ENCODE measurements at regions of chr1 and their contacts with region 1.

Region 1: DNA sequence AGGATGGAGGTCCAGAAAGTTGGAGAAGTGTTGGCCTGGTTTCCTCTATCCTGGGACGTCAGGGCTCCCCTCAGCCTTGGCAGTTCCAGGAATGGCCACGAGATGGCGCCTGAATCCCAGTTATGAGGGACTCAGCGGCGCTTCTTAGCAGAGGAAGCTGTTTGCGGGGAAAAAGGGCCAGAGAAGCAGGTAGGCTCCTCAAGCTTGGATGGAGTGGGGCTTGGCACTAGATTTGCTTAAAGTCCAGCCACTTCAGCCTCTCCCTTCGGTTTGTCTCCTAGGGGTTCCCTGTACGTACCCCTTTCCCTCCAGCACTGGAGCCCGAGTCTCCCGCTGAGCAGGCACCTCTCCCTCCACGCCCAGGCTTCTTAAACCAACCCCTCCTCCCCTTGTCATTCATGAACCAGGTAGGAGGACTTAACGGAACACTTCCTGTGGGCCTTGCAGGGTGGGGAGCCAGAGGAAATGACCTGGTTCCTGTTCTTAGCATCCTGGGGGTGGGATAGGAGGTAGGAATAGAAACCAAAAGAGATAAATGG is 32.0 kb upstream of the TENT5B start:
- DNase-seq: peak; percentile 89
- H3K4me3 ChIP-seq: no peak overlapping the region
- H3K27ac ChIP-seq: no peak overlapping the region
- H3K4me1 ChIP-seq: peaks cover 9% of the 10 kb centered on the region
- H3K27me3 ChIP-seq: no peaks in the 10 kb centered on the region
- CTCF ChIP-seq: peak; percentile 94

Region 2: DNA sequence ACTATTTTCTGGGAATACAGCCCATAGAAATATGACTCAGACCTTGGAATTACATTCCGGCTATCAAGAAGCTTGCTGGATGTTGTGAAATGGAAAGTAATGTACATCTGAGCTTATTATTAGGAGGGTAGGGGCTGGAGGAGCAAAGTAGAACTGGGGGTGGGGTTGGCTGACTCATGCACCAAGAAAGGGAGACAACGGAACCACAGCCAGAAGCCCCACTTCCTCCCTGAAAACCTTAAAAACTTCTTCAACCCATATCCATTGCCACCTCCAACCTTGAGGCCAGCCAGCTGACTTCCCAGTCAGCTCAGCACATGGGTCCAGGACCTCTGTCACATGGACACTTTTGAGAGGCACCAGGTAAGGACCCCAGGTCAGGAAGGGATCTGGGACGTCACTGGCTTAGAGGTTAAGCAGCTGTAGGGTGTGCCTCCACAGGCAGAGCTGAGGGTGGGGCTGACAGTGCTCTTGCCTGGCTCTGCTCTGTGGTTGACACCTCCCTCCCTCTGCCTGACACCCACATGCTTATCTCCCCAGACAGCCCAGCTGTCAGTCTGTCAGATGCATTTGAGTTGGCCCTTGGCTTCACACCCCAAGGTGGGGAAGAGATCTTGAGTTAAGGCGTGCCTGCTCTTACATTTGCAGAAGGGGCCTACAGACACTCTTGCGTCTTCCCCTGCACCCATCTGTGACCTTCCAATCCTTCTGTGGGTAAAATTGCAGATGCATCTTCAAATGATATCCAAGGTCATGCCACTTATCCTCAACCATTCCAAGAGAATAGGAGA is 666.4 kb before region 1 on chr1:
- CTCF ChIA-PET with region 1: no interaction called
- POLR2A ChIA-PET with region 1: no interaction called
- intact Hi-C with region 1: no loop called
- DNase-seq: peak; percentile 26
- H3K4me3 ChIP-seq: no peak overlapping the region
- H3K27ac ChIP-seq: no peak overlapping the region
- H3K4me1 ChIP-seq: no peaks in the 10 kb centered on the region
- H3K27me3 ChIP-seq: no peaks in the 10 kb centered on the region
- CTCF ChIP-seq: no peak

Region 3: GRCh38 chr1:26820784-26821269 is 223.9 kb before region 1 on chr1:
- CTCF ChIA-PET with region 1: no interaction called
- POLR2A ChIA-PET with region 1: no interaction called
- intact Hi-C with region 1: no loop called
- DNase-seq: peak; percentile 21
- H3K4me3 ChIP-seq: no peak overlapping the region
- H3K27ac ChIP-seq: no peak overlapping the region
- H3K4me1 ChIP-seq: no peaks in the 10 kb centered on the region
- H3K27me3 ChIP-seq: no peaks in the 10 kb centered on the region
- CTCF ChIP-seq: peak; percentile 30; the same call in 1 of the 2 replicates

Region 4: DNA sequence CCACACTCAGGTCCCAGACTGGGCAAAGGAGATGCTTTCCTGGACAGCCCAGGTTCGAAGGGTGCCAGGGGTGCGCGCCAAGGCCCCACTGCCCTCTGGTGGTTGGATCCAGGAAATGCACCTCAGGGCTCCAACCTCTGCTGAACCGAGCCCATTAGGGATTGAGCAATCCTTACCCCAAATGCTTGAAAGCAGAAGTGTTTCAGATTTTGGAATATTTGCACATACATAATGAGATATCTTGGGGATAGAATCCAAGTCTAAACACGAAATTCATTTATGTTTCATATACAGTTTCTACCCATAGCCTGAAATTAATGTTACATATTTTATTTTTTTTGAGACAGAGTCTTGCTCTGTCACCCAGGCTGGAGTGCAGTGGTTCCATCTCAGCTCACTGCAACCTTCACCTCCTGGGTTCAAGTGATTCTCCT is 52.8 kb after region 1 on chr1:
- CTCF ChIA-PET with region 1: interaction called, 34 read pairs
- POLR2A ChIA-PET with region 1: interaction called, 3 read pairs
- intact Hi-C with region 1: loop called (anchors 1 kb)
- DNase-seq: peak; percentile 86
- H3K4me3 ChIP-seq: no peak overlapping the region
- H3K27ac ChIP-seq: no peak overlapping the region
- H3K4me1 ChIP-seq: peaks cover 16% of the 10 kb centered on the region
- H3K27me3 ChIP-seq: no peaks in the 10 kb centered on the region
- CTCF ChIP-seq: peak; percentile 95

Region 5: DNA sequence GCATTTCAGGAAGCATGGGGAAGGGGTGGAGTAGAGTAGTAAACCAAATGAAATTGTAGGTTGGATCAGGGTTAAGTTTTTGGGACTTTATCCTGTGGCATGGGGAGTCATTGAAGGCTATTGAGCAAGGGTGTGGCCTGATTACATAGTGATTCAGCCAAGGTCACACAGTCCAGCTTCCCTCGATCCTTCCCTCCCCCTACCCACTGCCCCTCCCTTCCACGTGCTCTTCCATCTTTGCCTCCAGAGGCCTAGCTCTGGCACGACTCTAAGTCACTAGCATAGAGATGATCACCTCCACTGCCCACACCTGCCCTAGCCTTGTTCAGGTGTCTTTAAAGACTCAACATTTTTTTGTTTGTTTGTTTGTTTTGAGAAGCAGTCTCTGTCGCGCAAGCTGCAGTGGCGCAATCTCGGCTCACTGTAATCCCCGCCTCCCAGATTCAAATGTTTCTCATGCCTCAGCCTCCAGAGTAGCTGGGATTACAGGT is 147.4 kb after region 1 on chr1:
- CTCF ChIA-PET with region 1: no interaction called
- POLR2A ChIA-PET with region 1: no interaction called
- intact Hi-C with region 1: loop called (anchors 10 kb)
- DNase-seq: no peak
- H3K4me3 ChIP-seq: no peak overlapping the region
- H3K27ac ChIP-seq: no peak overlapping the region
- H3K4me1 ChIP-seq: no peaks in the 10 kb centered on the region
- H3K27me3 ChIP-seq: no peaks in the 10 kb centered on the region
- CTCF ChIP-seq: no peak

Region 6: DNA sequence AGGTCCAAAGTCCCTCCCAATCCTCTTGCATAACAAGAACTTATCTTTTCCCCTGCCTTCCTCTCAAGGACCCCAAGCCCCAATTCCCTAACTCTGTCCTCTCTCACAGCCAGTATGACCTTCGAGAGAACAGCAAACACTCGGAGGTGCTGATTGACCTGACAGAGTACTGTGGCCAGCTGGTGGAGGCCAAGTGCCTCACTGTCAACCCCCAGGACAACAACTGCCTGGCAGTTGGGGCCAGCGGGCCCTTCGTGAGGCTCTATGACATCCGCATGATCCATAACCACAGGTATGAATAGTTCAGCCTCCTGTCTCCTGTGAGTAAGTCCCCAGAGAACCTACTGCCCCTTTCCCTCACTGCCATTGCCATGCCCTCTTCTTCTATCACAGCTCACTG is 247.4 kb after region 1 on chr1:
- CTCF ChIA-PET with region 1: interaction called, 4 read pairs
- POLR2A ChIA-PET with region 1: interaction called, 14 read pairs
- intact Hi-C with region 1: no loop called
- DNase-seq: no peak
- H3K4me3 ChIP-seq: no peak overlapping the region
- H3K27ac ChIP-seq: no peak overlapping the region
- H3K4me1 ChIP-seq: no peaks in the 10 kb centered on the region
- H3K27me3 ChIP-seq: no peaks in the 10 kb centered on the region
- CTCF ChIP-seq: no peak

Region 7: DNA sequence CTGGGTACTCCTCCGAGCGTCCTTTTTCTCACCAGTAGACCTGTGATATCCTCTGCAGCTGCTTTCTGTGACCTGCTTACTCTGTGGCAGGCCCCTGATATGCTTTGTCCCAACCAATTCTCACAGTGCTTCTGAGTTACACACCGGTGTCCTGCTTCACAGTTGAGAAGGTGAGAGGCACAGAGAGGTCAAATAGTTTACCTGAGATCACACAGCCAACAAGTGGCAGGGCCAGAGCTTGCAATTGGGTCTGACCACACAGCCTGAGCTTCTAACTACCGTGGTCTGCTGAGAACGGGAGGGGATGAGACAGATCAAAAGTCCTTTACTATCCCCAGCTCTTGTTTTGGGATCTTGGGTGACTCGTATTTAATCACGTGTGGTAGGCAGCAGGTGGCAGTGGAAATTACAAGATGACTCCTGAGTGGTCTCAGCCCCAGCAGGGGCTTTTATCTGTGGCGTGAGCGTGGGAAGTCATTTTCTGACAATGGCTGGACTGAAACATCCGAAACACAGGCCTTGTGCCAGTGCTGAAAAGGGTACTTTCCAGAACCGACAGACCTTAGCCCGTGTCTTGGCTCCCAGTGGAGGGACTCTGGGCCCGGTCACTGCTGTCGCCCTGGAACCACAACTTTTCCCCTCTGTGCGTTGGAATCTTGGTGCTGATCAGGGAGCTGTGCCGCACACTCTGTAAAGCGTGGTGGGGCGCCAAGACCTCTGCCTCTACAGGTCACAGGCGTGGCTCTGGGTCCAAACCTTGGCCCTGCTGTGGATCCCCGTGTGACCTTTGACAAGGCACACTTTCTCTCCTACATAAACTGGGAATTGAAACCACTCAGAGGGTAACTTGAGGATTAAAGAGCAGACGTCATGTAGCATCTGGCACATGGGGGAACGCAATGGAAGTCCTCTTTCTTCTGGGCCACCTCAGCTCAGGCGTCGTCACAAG is 839.6 kb after region 1 on chr1:
- CTCF ChIA-PET with region 1: no interaction called
- POLR2A ChIA-PET with region 1: no interaction called
- intact Hi-C with region 1: no loop called
- DNase-seq: no peak
- H3K4me3 ChIP-seq: no peak overlapping the region
- H3K27ac ChIP-seq: no peak overlapping the region
- H3K4me1 ChIP-seq: no peaks in the 10 kb centered on the region
- H3K27me3 ChIP-seq: no peaks in the 10 kb centered on the region
- CTCF ChIP-seq: no peak